ENCODE measurements at regions of chr10 and their contacts with region 1.

Region 1: DNA sequence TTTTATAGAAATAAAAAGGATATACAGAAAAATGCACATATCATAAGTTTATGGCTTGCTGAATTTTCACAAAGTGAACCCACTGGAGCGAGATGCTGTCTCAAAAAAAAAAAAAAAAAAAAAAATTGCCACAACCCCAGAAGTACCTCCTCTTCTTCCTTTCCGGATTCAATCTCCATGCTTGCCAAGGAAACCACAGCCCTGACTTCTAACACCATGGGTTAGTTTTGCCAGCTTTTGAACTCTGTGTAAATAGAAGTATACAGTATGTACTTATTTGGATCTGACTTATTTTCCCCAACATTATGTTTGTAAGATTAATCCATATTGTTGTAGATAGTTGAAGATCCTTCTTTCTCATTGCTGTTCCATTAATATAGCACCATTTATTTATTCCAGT is 40.0 kb downstream of the FANK1 start:
- DNase-seq: peak; percentile 28
- H3K4me3 ChIP-seq: no peak overlapping the region
- H3K27ac ChIP-seq: no peak overlapping the region
- H3K4me1 ChIP-seq: no peaks in the 10 kb centered on the region
- H3K27me3 ChIP-seq: peaks cover 2 to 3% of the 10 kb centered on the region in 2 experiments
- CTCF ChIP-seq: no peak
- POLR2A ChIP-seq: no peak

Region 2: GRCh38 chr10:125406998-125407502 is 529.3 kb before region 1 on chr10:
- CTCF ChIA-PET with region 1: no interaction called
- POLR2A ChIA-PET with region 1: no interaction called
- dilution Hi-C with region 1: no loop called
- intact Hi-C with region 1: no loop called
- DNase-seq: no peak
- H3K4me3 ChIP-seq: no peak overlapping the region
- H3K27ac ChIP-seq: no peak overlapping the region
- H3K4me1 ChIP-seq: no peaks in the 10 kb centered on the region
- H3K27me3 ChIP-seq: no peaks in the 10 kb centered on the region
- CTCF ChIP-seq: no peak
- POLR2A ChIP-seq: no peak

Region 3: GRCh38 chr10:125868372-125868975 is 67.9 kb before region 1 on chr10:
- CTCF ChIA-PET with region 1: interaction called, 24 read pairs
- POLR2A ChIA-PET with region 1: no interaction called
- dilution Hi-C with region 1: no loop called
- intact Hi-C with region 1: loop called (anchors 2 kb)
- DNase-seq: peak; percentile 73
- H3K4me3 ChIP-seq: no peak overlapping the region
- H3K27ac ChIP-seq: no peak overlapping the region
- H3K4me1 ChIP-seq: no peaks in the 10 kb centered on the region
- H3K27me3 ChIP-seq: no peaks in the 10 kb centered on the region
- CTCF ChIP-seq: peak; percentile 57 to 61
- POLR2A ChIP-seq: no peak

Region 4: DNA sequence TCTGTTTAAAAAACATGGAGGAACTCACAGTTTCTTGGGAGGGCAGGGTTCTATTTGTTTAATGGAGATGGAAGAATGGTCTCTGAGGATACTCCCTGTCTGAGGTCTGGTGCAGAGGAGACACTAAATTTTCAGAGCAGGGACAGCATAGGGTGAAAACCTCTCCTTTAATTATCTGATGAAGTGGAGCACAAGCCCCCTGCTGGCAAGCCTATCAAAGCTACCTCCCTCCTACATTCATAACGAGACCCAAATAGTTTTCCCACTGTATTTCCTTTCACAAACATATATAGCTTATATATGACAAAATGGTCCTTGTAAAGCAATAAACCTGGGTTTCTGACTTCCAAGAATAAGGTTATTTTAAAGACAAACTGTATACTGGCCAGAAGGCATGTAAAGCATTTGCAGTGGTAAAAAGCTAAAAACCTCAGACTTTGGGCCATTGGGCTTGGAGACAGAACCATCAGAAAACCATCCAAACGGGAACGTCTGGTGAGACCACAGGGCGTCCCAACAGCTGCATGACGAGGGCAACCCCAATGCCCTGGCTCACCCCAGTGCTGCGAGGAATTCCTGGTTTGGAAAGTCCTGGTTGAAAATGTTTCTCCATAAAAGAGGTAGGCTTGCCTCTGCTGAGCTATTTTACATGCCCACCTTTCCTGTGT is 161.4 kb after region 1 on chr10:
- CTCF ChIA-PET with region 1: interaction called, 27 read pairs
- POLR2A ChIA-PET with region 1: no interaction called
- dilution Hi-C with region 1: no loop called
- intact Hi-C with region 1: no loop called
- DNase-seq: no peak
- H3K4me3 ChIP-seq: no peak overlapping the region
- H3K27ac ChIP-seq: no peak overlapping the region
- H3K4me1 ChIP-seq: peaks cover 8% of the 10 kb centered on the region
- H3K27me3 ChIP-seq: peaks cover 0 to 2% of the 10 kb centered on the region in 2 experiments
- CTCF ChIP-seq: peak; percentile 20 to 38
- POLR2A ChIP-seq: no peak

Region 5: DNA sequence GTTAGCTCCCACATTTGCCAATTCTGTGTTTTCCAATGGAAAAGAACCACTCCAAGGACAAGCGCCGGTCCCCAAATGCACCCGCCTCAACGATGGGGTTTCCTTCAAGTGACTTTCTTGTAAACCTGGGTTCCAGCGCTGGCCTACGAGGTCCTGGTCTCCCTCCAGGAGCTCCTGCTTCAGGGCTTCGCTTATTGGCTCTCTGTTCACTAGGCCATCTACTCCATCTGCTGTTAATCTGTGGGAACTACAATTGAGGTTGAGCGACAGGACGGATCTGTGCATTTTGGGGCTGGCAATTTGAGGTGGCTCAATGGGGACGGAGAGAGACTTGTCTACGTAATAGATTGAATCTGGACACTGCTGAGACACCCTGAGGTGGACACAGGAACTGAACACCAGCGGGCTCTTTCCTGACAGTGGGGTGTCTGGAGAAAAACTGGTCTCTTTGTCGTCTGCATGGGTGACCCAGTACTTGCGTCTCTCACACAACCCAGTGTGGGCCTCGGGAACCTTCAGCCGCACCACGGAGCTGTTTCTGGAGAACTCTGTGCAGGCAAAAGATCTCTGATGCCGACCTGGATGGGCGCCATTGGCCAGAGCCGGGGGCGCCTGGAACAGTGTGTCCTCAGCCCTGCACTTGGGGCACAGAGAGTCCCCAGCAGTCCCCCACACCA is 567.9 kb after region 1 on chr10:
- CTCF ChIA-PET with region 1: interaction called, 35 read pairs
- POLR2A ChIA-PET with region 1: no interaction called
- dilution Hi-C with region 1: no loop called
- intact Hi-C with region 1: no loop called
- DNase-seq: peak; percentile 47
- H3K4me3 ChIP-seq: no peak overlapping the region
- H3K27ac ChIP-seq: no peak overlapping the region
- H3K4me1 ChIP-seq: no peaks in the 10 kb centered on the region
- H3K27me3 ChIP-seq: no peaks in the 10 kb centered on the region
- CTCF ChIP-seq: peak; percentile 39 to 50
- POLR2A ChIP-seq: no peak

Region 6: GRCh38 chr10:126749015-126749655 is 812.8 kb after region 1 on chr10:
- CTCF ChIA-PET with region 1: interaction called, 78 read pairs
- POLR2A ChIA-PET with region 1: no interaction called
- dilution Hi-C with region 1: no loop called
- intact Hi-C with region 1: loop called (anchors 1 kb)
- DNase-seq: peak; percentile 69
- H3K4me3 ChIP-seq: no peak overlapping the region
- H3K27ac ChIP-seq: no peak overlapping the region
- H3K4me1 ChIP-seq: no peaks in the 10 kb centered on the region
- H3K27me3 ChIP-seq: no peaks in the 10 kb centered on the region
- CTCF ChIP-seq: peak; percentile 67 to 69
- POLR2A ChIP-seq: no peak